H1 (cell line): ENCODE measurements at regions of chr1 and their contacts with region 1.

Region 1: GRCh38 chr1:110209715-110210603 is at the start of gene KCNC4:
- DNase-seq: peak; percentile 72 to 85
- H3K4me3 ChIP-seq: peak within 1 kb of the TSS; percentile 41 to 78 (median 62)
- H3K27ac ChIP-seq: no peak within 1 kb of the TSS
- H3K4me1 ChIP-seq: peaks cover 7 to 23% (median 20%) of the 10 kb centered on the region in 4 experiments
- H3K27me3 ChIP-seq: peaks cover 5 to 22% (median 21%) of the 10 kb centered on the region in 4 experiments
- CTCF ChIP-seq: no peak
- EP300 ChIP-seq: peak in 1 of 2 experiments; percentile 85; a peak in 1 of 3 replicates
- POLR2A ChIP-seq: peak in 1 of 2 experiments; percentile 38; a peak in 1 of 3 replicates
- RAD21 ChIP-seq: no peak
- total RNA-seq, gene KCNC4: 11.2 TPM in 2 replicates

Region 2: DNA sequence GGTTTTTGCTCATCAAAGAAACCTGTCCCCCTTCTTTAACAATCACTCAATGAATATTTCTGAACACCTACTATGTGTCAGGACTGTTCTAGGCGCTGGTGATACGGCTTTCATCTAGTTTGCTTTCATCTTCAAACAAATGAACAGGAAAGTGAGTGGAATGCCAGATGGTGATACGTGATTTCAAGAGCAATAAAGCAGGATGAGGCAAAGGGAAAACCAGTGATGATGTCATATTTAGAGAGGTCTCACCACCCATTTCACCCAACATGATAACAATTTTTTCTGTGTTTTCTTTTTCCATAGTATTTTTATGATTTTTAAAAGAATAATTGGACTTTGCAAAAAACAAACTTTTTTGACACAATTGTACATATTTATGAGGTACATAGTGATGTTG is 71.0 kb before region 1 on chr1:
- CTCF ChIA-PET with region 1: no interaction called
- POLR2A ChIA-PET with region 1: no interaction called
- DNase-seq: no peak
- H3K4me3 ChIP-seq: no peak overlapping the region
- H3K27ac ChIP-seq: no peak overlapping the region
- H3K4me1 ChIP-seq: peaks cover 3 to 21% (median 13%) of the 10 kb centered on the region in 4 experiments; a peak in 5 of 7 replicates
- H3K27me3 ChIP-seq: peaks cover 0 to 5% (median 0%) of the 10 kb centered on the region in 4 experiments; a peak in 3 of 7 replicates
- CTCF ChIP-seq: no peak
- EP300 ChIP-seq: no peak
- POLR2A ChIP-seq: no peak
- RAD21 ChIP-seq: no peak

Region 3: DNA sequence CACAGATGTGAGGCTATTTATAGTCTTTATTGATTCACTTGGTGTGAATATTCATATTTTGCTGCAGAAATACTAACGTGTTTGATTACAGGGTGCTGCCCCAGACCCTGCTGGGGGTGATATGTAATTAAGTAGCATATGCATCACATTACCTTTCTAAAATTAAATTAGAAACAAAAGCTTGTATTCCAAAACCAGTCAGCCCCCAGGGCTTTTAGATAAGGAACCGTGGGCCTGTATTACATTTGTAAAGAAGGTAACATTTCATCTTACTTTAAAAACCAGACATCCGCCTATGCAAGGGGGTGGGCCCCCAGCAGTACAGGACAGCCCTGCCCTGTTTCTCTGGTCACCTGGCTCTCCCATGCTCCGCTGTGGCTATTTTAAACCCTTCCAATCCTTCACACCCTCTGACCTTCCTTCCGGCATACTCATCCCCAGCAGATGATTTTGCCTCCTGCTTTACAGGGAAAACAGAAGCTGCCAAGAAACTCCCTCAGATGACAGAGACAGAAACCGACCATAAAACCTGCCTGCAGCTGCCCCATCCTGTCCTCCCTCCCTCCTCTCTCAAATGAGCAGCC is 21.8 kb before region 1 on chr1:
- CTCF ChIA-PET with region 1: interaction called, 30 read pairs
- POLR2A ChIA-PET with region 1: interaction called, 3 read pairs
- DNase-seq: no peak
- H3K4me3 ChIP-seq: no peak overlapping the region
- H3K27ac ChIP-seq: no peak overlapping the region
- H3K4me1 ChIP-seq: peaks cover 0 to 2% (median 0%) of the 10 kb centered on the region in 4 experiments; a peak in 1 of 7 replicates
- H3K27me3 ChIP-seq: no peaks in the 10 kb centered on the region
- CTCF ChIP-seq: no peak
- EP300 ChIP-seq: no peak
- POLR2A ChIP-seq: no peak
- RAD21 ChIP-seq: no peak

Region 4: DNA sequence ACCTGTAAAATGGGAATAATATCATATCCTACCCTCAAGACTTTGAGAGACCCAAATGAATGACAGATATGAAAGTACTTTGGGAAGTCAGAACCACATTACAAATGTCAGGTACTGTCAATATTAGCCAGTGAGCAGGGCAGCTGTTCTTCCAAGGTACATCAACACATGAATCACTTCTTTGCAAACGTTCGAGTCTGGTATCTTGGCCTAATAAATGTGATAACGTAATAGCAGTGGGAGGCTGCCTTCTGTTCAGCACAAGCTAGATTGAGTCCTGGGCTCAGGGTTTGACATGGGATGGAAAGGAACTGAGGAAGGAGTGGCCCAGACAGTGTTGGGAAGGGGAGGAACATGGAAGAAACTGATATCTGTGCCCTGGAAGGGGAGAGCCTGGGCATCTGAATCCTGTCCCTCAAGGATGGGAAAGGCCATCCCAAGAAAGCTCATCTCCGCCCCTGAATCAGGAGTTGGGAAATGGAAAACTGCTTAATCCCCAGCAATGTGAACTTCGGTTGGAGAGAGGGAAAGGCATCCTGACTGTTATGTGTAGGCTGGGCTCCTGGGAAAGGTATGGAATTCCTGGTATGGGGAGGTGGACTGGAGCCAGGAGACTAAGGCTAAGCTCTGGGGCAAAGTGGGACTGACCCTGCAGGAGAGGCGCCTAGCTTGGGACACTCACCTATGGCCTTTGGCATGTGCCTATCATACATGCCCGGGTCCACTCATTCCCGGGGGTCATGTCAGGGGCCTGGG is 14.5 kb after region 1 on chr1:
- CTCF ChIA-PET with region 1: interaction called, 19 read pairs
- POLR2A ChIA-PET with region 1: interaction called, 7 read pairs
- DNase-seq: no peak
- H3K4me3 ChIP-seq: no peak overlapping the region
- H3K27ac ChIP-seq: no peak overlapping the region
- H3K4me1 ChIP-seq: no peaks in the 10 kb centered on the region; a peak in 1 of 7 replicates
- H3K27me3 ChIP-seq: no peaks in the 10 kb centered on the region
- CTCF ChIP-seq: no peak
- EP300 ChIP-seq: no peak
- POLR2A ChIP-seq: no peak
- RAD21 ChIP-seq: no peak

Region 5: DNA sequence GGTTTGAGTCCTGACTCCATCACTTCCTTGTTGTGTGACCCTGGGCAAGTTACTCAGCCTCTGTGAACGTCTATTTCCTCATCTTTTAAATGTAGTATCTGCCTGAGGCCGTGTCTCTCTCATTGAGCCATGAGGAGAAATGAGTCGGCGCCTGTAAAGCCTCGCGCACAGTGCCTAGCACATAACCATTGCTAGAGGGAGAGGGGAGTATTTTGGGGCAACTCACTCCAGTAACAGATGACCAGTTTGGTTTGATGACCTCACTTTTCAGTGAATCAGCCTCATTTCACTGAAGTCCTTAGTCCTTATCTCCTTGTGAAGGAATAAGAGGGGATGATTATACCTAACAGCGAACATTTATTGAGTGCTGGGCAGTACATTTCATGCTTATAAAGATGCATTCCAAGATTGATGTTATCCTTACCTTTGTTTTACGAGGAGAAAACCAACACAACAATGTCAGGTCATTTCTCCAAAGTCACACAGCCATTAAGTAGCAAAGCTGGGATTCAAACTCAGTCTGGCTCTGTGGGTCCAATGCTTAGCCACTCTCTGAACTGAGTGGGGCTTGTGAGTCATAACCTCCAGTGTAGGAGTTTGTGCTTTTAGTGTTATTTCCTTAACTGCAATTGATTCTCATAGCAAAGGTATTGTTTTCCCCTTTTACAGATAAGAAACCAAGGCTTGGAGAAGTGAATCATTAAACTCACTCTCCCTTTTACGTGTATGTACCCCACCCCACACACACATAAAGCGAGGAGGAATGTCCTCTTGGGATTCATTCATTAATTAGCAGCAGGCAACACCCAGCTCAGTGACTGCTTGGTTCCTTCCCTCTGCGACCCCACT is 26.1 kb after region 1 on chr1:
- CTCF ChIA-PET with region 1: interaction called, 23 read pairs
- POLR2A ChIA-PET with region 1: interaction called, 3 read pairs
- DNase-seq: no peak
- H3K4me3 ChIP-seq: no peak overlapping the region
- H3K27ac ChIP-seq: no peak overlapping the region
- H3K4me1 ChIP-seq: peaks cover 0 to 9% (median 3%) of the 10 kb centered on the region in 4 experiments; a peak in 3 of 7 replicates
- H3K27me3 ChIP-seq: no peaks in the 10 kb centered on the region; a peak in 1 of 7 replicates
- CTCF ChIP-seq: no peak
- EP300 ChIP-seq: no peak
- POLR2A ChIP-seq: no peak
- RAD21 ChIP-seq: no peak

Region 6: DNA sequence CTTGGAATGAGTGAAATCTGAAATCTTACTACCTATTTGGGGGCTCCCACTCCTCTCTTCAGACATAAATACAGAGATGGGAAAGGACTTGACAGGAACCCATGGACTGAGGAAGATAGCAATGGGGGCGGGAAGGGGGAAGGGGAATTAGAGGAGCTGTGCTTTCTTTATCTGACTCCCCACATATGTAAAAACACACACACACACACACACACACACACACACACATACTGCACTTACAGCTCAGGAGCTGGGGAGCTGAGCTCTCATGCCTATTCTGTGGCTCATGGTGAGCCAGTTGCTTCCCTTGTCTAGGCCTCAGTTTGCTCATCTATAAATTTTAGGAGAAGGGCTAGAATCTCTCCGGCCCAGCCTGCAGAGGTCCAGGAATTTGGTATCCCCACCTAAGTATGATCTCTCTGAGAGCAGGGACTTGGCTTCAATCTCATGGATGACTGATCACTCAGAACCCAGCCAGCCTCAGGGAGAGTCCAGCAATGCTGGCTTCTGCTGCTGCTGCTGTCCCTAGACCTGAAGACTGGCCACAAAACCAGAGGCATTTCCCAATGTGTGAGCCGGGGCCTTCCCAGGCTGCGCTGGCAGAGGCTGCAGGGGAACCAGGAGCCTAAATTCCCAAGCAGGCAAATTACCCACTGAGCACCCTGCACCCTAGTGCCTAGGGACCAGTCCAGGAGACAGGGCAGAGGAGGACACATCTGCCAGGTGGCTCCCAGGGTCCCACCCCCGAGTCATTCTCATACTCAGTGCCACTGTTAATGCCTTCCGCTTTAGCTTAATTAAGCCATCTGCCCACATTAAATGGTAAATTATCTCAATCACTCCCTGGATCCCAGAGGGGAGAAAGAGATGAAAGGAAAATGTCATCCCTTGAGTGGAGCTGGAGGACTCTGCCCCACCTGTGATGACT is 71.7 kb after region 1 on chr1:
- CTCF ChIA-PET with region 1: interaction called, 19 read pairs
- POLR2A ChIA-PET with region 1: no interaction called
- DNase-seq: no peak
- H3K4me3 ChIP-seq: no peak overlapping the region
- H3K27ac ChIP-seq: no peak overlapping the region
- H3K4me1 ChIP-seq: peaks cover 0 to 3% (median 0%) of the 10 kb centered on the region in 4 experiments; a peak in 2 of 7 replicates
- H3K27me3 ChIP-seq: no peaks in the 10 kb centered on the region
- CTCF ChIP-seq: no peak
- EP300 ChIP-seq: no peak
- POLR2A ChIP-seq: no peak
- RAD21 ChIP-seq: no peak

Region 7: GRCh38 chr1:110384581-110385321 is 174.8 kb after region 1 on chr1:
- CTCF ChIA-PET with region 1: interaction called, 12 read pairs
- POLR2A ChIA-PET with region 1: no interaction called
- DNase-seq: no peak
- H3K4me3 ChIP-seq: no peak overlapping the region
- H3K27ac ChIP-seq: no peak overlapping the region
- H3K4me1 ChIP-seq: no peaks in the 10 kb centered on the region
- H3K27me3 ChIP-seq: no peaks in the 10 kb centered on the region
- CTCF ChIP-seq: no peak
- EP300 ChIP-seq: no peak
- POLR2A ChIP-seq: no peak
- RAD21 ChIP-seq: no peak